PC-9 (cell line): ENCODE measurements at regions of chr17 and their contacts with region 1.

Region 1: GRCh38 chr17:43645765-43646481 is 15.8 kb downstream of the MEOX1 start:
- DNase-seq: no peak
- H3K4me3 ChIP-seq: no peak overlapping the region
- H3K27ac ChIP-seq: no peak overlapping the region
- H3K4me1 ChIP-seq: no peaks in the 10 kb centered on the region
- H3K27me3 ChIP-seq: no peaks in the 10 kb centered on the region
- CTCF ChIP-seq: no peak

Region 2: DNA sequence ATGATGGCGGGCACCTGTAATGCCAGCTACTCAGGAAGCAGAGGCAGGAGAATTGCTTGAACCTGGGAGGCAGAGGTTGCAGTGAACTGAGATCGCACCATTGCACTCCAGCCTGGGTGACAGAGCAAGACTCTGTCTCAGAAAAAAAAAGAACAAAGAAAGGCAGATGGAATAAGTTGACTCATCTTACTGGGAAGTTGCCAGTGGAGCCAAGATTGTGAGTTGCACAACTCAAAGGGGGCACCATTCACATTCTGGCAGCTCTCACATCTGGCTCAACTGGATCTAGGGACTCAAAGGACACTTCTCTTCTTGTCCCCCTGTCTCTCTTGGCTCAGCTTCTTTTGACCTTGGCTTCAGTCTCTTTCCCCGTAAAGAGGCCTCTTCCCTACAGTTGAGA is 46.1 kb before region 1 on chr17:
- CTCF ChIA-PET with region 1: no interaction called
- POLR2A ChIA-PET with region 1: interaction called, 32 read pairs
- intact Hi-C with region 1: no loop called
- DNase-seq: peak in 1 of 2 experiments; percentile 32
- H3K4me3 ChIP-seq: no peak overlapping the region
- H3K27ac ChIP-seq: no peak overlapping the region
- H3K4me1 ChIP-seq: peaks cover 8% of the 10 kb centered on the region
- H3K27me3 ChIP-seq: no peaks in the 10 kb centered on the region
- CTCF ChIP-seq: no peak

Region 3: DNA sequence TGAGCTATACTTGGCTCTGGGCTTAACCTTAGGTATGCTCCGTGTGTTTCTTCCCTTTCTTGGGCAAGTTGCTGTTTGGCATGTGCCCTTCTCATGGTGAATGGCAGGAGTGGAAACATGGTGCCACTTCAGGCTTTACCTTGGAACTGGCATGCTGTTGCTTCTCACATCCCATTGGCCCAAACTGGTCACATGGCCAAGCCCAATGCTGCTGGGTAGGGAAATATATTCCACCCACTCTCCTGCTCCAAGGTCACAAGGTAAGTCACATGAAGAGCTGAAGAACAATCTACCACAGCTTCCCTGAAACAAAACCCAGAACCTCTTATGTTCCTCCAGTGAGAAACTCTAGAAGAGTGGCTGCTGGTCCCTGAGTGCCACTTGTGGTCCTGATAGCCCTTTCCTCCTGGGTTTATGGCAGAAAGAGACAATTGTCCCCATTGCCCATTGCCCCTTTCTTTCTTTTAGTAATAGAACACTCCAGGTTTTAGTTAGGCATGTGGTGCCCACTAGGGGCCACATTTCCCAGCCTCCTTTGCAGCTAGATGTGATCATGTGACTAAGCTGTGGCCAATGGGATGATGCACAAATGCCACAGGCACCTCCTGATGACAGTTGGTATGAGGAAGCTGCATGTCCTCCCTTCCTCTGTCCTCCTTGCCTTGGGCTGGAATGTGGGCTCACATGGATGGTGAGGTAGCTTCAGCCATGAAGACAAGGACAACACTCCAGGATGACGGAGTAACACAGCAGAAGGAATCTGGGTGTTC is 34.5 kb before region 1 on chr17:
- CTCF ChIA-PET with region 1: no interaction called
- POLR2A ChIA-PET with region 1: interaction called, 16 read pairs
- intact Hi-C with region 1: no loop called
- DNase-seq: no peak
- H3K4me3 ChIP-seq: no peak overlapping the region
- H3K27ac ChIP-seq: no peak overlapping the region
- H3K4me1 ChIP-seq: no peaks in the 10 kb centered on the region
- H3K27me3 ChIP-seq: no peaks in the 10 kb centered on the region
- CTCF ChIP-seq: no peak

Region 4: DNA sequence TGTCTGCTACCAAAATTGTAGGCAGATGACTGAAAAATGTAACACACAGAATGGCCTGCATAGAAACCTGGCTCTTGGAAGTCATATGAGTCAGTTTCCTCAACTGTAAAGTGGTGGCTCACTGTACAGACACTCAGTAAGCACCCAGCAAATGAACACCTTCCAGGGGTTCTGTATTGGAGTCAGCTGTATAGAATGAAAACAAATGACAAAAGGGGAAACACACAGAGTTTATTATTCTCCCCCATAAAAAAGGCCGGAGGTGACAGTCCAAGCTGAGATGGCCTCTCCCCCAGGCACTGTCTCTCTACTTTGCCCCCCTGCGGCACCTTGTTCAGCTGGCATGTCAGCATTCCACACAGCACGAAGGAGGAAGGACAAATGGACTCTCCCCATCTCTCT is 22.0 kb after region 1 on chr17:
- CTCF ChIA-PET with region 1: no interaction called
- POLR2A ChIA-PET with region 1: interaction called, 14 read pairs
- intact Hi-C with region 1: no loop called
- DNase-seq: peak; percentile 72 to 76
- H3K4me3 ChIP-seq: peak overlapping the region; percentile 19; the same call in 1 of the 2 replicates
- H3K27ac ChIP-seq: peak overlapping the region; percentile 66
- H3K4me1 ChIP-seq: peaks cover 49% of the 10 kb centered on the region
- H3K27me3 ChIP-seq: no peaks in the 10 kb centered on the region
- CTCF ChIP-seq: no peak

Region 5: DNA sequence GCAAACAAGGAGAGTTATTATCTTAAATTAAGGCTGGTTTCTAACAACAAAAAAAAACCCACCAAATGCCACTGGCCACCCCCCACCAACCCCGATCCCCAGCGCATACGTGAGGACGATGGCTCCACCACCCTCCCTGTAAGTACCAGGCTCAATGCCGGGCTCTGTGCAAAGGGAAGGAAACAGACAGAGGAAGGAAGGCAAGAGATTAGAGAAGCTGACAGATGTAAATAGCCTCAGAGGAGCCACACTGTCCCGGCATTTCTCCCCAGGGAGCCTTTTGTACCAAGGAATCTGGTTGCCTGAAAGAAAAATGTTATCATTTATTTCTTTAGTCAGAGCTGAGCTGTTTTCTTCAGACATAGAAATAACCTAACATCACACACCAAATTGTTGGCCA is 99.6 kb after region 1 on chr17:
- CTCF ChIA-PET with region 1: no interaction called
- POLR2A ChIA-PET with region 1: interaction called, 36 read pairs
- intact Hi-C with region 1: no loop called
- DNase-seq: no peak
- H3K4me3 ChIP-seq: no peak overlapping the region
- H3K27ac ChIP-seq: no peak overlapping the region
- H3K4me1 ChIP-seq: peaks cover 17% of the 10 kb centered on the region
- H3K27me3 ChIP-seq: no peaks in the 10 kb centered on the region
- CTCF ChIP-seq: no peak